HEK293 (cell line): ENCODE measurements at regions of chr19 and their contacts with region 1.

Region 1: GRCh38 chr19:46283771-46284170 is 13.1 kb upstream of the HIF3A start:
- H3K4me3 ChIP-seq: no peak overlapping the region
- H3K27ac ChIP-seq: no peak overlapping the region
- H3K4me1 ChIP-seq: no peaks in the 10 kb centered on the region
- CTCF ChIP-seq: no peak

Region 2: GRCh38 chr19:46173886-46174507 is 109.8 kb before region 1 on chr19:
- CTCF ChIA-PET with region 1: no interaction called
- POLR2A ChIA-PET with region 1: no interaction called
- H3K4me3 ChIP-seq: no peak overlapping the region
- H3K27ac ChIP-seq: no peak overlapping the region
- H3K4me1 ChIP-seq: no peaks in the 10 kb centered on the region
- CTCF ChIP-seq: no peak

Region 3: DNA sequence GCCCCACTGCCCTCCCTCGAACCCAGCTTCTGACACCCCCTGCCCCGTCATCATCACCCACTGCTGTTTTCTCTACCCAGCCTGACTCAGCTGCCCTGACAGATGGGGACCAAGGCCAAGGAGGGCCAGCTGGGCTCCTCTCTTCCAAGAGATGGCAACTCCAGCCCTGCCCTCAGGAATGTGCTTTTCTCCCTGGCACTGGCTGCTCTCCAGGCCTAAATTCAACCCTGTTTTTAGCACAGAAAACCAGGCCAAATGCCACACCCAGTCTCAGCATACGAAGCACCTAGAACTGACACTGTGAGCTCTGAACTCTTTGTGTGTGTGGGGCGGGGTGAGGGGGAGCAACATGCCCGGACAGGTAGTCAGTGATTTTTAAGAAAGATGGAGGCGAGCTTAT is 77.6 kb before region 1 on chr19:
- CTCF ChIA-PET with region 1: no interaction called
- POLR2A ChIA-PET with region 1: no interaction called
- H3K4me3 ChIP-seq: no peak overlapping the region
- H3K27ac ChIP-seq: no peak overlapping the region
- H3K4me1 ChIP-seq: no peaks in the 10 kb centered on the region
- CTCF ChIP-seq: no peak

Region 4: GRCh38 chr19:46299004-46299509 is 15.3 kb after region 1 on chr19:
- CTCF ChIA-PET with region 1: interaction called, 18 read pairs
- POLR2A ChIA-PET with region 1: no interaction called
- H3K4me3 ChIP-seq: no peak overlapping the region
- H3K27ac ChIP-seq: peak overlapping the region; percentile 37; the same call in 1 of the 2 replicates
- H3K4me1 ChIP-seq: peaks cover 19% of the 10 kb centered on the region
- CTCF ChIP-seq: no peak

Region 5: GRCh38 chr19:46346821-46347571 is 63.2 kb after region 1 on chr19 and contains the start of gene PPP5C:
- CTCF ChIA-PET with region 1: interaction called, 31 read pairs
- POLR2A ChIA-PET with region 1: no interaction called
- H3K4me3 ChIP-seq: peak within 1 kb of the TSS; percentile 98
- H3K27ac ChIP-seq: peak within 1 kb of the TSS; percentile 93
- H3K4me1 ChIP-seq: peaks cover 19% of the 10 kb centered on the region
- CTCF ChIP-seq: peak; percentile 100

Region 6: GRCh38 chr19:46487802-46488445 is 204.2 kb after region 1 on chr19:
- CTCF ChIA-PET with region 1: interaction called, 17 read pairs
- POLR2A ChIA-PET with region 1: no interaction called
- H3K4me3 ChIP-seq: peak overlapping the region; percentile 11
- H3K27ac ChIP-seq: no peak overlapping the region
- H3K4me1 ChIP-seq: peaks cover 5% of the 10 kb centered on the region; the same call in 1 of the 2 replicates
- CTCF ChIP-seq: peak; percentile 91